Ascending aorta (tissue), 2 donors: ENCODE measurements at regions of chr7 and their contacts with region 1.

Region 1: DNA sequence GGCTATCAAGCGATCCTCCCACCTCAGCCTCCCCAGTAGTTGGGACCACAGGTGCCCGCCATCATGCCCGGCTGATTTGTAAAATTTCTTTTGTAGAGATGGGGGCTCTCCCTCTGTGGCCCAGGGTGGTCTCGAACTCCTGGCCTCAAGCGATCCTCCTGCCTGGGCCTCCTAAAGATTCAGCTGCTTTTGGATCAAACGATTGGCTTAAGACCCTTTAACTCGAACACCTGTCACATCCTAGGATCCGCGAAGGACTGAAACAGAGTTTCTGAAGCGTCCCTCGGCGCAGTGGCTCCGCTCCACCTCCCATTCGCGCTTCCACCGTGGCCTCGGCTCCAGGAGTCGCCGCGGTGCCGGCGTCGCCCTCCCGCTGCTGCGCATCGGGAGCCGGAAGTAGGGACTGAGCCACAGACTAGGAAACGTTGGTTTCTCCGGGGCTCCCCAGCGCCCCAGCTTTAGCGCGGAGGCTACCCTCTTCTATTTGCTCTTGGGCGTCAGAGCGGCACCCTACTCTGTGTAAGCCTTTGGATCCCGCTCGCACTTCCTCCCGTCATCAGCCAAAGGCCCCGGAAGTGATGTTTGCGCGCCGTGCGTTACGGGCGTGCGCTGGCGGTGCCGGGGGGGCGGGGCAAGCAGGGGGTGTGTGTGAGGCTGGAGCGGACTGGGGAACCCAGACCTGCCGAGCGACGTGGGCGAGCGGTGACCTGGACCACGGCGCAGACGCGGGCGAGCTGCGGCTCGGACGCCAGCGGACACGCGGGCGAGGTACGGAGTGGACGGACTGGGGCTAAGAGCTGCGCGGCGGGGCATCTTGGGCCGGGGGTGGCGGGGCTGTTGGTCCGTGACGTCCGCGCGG is 53.0 kb downstream of the KCTD7 start:
- DNase-seq: peak; percentile 88 to 99
- H3K4me3 ChIP-seq: peak overlapping the region; percentile 68 to 87
- H3K27ac ChIP-seq: peak overlapping the region; percentile 99 to 100
- H3K4me1 ChIP-seq: peaks cover 4 to 11% of the 10 kb centered on the region in 2 donors
- H3K27me3 ChIP-seq: no peaks in the 10 kb centered on the region
- CTCF ChIP-seq: no peak

Region 2: GRCh38 chr7:66591799-66592596 is 89.7 kb before region 1 on chr7:
- intact Hi-C with region 1: loop called (anchors 1 kb)
- DNase-seq: peak; percentile 67 to 95
- H3K4me3 ChIP-seq: peak overlapping the region; percentile 76 to 95
- H3K27ac ChIP-seq: peak overlapping the region; percentile 94 to 99
- H3K4me1 ChIP-seq: peaks cover 0 to 15% of the 10 kb centered on the region in 2 donors
- H3K27me3 ChIP-seq: no peaks in the 10 kb centered on the region
- CTCF ChIP-seq: no peak

Region 3: GRCh38 chr7:66642186-66642585 is 39.5 kb before region 1 on chr7:
- intact Hi-C with region 1: no loop called
- DNase-seq: no peak
- H3K4me3 ChIP-seq: no peak overlapping the region
- H3K27ac ChIP-seq: no peak overlapping the region
- H3K4me1 ChIP-seq: no peaks in the 10 kb centered on the region
- H3K27me3 ChIP-seq: no peaks in the 10 kb centered on the region
- CTCF ChIP-seq: no peak

Region 4: DNA sequence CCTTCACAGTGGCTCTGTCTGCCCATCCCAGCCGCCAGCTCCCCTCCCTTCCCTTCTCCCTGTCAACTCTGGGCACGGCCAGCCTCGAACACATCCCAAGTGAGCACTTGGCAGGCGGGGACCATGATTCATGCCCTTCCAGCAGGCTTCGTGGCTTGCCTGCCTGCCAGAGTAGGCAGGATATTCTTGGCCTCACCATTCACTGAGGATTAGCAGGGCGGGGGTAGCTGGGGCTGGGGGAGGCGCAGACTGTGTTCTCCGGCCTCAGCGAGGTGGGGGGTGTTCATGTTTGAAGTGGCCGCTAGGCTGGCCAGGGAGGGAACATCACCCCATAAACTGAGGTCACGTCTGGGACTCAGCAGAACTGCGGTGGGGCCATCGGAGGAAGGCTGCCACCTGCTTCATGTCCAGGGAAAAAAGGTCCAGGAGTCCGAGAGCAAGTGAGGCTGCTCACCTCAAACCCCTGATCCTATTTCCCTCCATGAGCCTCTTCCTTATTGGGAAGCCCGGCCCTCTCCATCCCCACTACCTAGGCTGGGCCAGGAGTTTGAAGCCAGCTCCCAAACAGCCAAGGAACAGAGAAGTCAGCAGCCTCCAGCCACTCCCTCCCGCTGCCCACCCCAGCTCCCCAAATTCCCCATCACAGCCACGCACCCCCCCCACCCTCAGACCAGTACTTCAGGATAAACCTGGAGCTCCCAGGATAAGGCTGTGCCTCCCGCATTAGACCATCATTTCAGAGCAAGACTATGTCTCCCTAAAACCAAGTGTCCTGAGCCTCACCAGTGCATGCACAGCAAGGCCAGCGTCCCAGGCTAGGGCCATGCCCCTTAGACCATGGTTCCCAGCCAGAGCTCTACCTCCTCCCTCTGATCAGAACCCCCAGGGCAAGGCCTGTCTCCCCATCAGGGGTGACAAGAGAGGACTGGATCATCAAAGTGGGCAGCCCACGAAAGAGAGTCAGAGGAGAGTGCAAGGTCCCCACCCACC is 16.0 kb after region 1 on chr7:
- intact Hi-C with region 1: loop called (anchors 1 kb)
- DNase-seq: peak in 1 of 2 donors; percentile 83
- H3K4me3 ChIP-seq: peak overlapping the region in 1 of 2 donors; percentile 11
- H3K27ac ChIP-seq: peak overlapping the region; percentile 76 to 77
- H3K4me1 ChIP-seq: peaks cover 6 to 17% of the 10 kb centered on the region in 2 donors
- H3K27me3 ChIP-seq: no peaks in the 10 kb centered on the region
- CTCF ChIP-seq: no peak

Region 5: GRCh38 chr7:66748822-66749221 is 67.1 kb after region 1 on chr7:
- intact Hi-C with region 1: no loop called
- DNase-seq: no peak
- H3K4me3 ChIP-seq: no peak overlapping the region
- H3K27ac ChIP-seq: no peak overlapping the region
- H3K4me1 ChIP-seq: peaks cover 0 to 3% of the 10 kb centered on the region in 2 donors
- H3K27me3 ChIP-seq: no peaks in the 10 kb centered on the region
- CTCF ChIP-seq: no peak